Astrocyte of the cerebellum (primary cell): ENCODE measurements at regions of chr5 and their contacts with region 1.

Region 1: GRCh38 chr5:134267366-134268018 is 41.6 kb upstream of the PPP2CA start:
- DNase-seq: no peak
- H3K4me3 ChIP-seq: no peak overlapping the region
- CTCF ChIP-seq: no peak

Region 2: GRCh38 chr5:134174841-134175839 is 92.4 kb before region 1 on chr5:
- in situ Hi-C with region 1: loop called (anchors 5 kb)
- DNase-seq: no peak
- H3K4me3 ChIP-seq: peak overlapping the region; percentile 93
- CTCF ChIP-seq: no peak

Region 3: DNA sequence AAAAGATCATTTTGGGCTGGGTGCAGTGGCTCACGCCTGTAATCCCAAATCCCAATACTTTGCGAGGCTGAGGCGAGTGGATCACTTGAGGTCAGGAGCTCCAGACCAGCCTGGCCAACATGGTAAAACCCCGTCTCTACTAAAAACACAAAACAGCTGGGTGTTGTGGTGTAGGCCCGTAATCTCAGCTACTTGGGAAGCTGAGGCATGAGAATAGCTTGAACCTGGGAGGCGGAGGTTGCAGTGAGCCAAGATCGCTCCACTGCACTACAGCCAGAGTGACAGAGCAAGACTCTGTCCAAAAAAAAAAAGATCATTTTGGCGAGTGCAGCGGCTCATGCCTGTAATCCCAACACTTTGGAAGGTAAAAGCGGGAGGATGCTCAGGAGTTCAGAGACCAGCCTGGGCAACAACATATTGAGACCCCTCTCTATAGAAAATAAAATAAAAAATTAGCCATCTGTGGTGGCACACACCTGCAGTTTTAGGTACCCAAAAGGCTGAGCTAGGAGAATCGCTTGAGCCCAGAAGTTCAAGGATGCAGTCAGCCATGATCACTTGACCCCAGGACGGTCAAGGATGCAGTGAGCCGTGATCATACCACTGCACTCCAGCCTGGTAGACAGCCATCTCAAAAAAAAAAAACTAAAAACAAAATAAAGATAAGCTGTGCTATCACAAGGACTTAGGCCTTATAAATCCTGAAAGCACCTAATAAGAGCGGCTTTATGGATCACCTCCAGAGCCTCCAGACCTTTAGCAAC is 57.8 kb before region 1 on chr5:
- in situ Hi-C with region 1: loop called (anchors 5 kb)
- DNase-seq: no peak
- H3K4me3 ChIP-seq: no peak overlapping the region
- CTCF ChIP-seq: no peak